Tibial artery (tissue), 4 donors: ENCODE measurements at regions of chr4 and their contacts with region 1.

Region 1: GRCh38 chr4:121943941-121944340 is 7.9 kb downstream of the TRPC3 start:
- DNase-seq: no peak
- H3K4me3 ChIP-seq: no peak overlapping the region
- H3K27ac ChIP-seq: no peak overlapping the region
- H3K4me1 ChIP-seq: no peaks in the 10 kb centered on the region
- H3K27me3 ChIP-seq: peaks cover 0 to 9% of the 10 kb centered on the region in 2 donors
- CTCF ChIP-seq: no peak

Region 2: GRCh38 chr4:121800961-121801714 is 142.8 kb before region 1 on chr4 and contains the start of gene EXOSC9:
- intact Hi-C with region 1: no loop called
- DNase-seq: peak; percentile 86 to 96
- H3K4me3 ChIP-seq: peak within 1 kb of the TSS; percentile 83 to 92
- H3K27ac ChIP-seq: peak within 1 kb of the TSS; percentile 81 to 85
- H3K4me1 ChIP-seq: peaks cover 0 to 16% (median 5%) of the 10 kb centered on the region in 4 donors
- H3K27me3 ChIP-seq: no peaks in the 10 kb centered on the region
- CTCF ChIP-seq: no peak

Region 3: DNA sequence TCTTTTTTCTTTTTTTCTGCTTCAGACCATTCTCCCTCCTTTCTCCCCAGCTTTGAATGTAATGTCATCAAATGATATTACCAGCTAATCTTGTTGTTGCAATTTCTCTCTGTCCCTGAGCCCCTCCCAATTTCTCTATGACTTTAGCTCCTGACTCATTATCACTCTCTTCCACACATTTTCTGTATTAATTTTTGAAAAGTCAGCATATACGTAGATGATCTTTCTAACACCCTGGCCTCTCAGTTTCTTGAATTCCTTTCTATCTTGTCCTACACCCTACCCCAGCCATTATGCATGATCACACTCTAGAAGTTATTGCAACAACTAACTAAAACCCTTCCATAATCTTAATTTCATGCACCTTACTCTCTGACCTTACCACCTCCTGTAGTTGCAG is 21.0 kb after region 1 on chr4:
- intact Hi-C with region 1: no loop called
- DNase-seq: no peak
- H3K4me3 ChIP-seq: no peak overlapping the region
- H3K27ac ChIP-seq: no peak overlapping the region
- H3K4me1 ChIP-seq: no peaks in the 10 kb centered on the region
- H3K27me3 ChIP-seq: peaks cover 0 to 6% of the 10 kb centered on the region in 2 donors
- CTCF ChIP-seq: no peak

Region 4: DNA sequence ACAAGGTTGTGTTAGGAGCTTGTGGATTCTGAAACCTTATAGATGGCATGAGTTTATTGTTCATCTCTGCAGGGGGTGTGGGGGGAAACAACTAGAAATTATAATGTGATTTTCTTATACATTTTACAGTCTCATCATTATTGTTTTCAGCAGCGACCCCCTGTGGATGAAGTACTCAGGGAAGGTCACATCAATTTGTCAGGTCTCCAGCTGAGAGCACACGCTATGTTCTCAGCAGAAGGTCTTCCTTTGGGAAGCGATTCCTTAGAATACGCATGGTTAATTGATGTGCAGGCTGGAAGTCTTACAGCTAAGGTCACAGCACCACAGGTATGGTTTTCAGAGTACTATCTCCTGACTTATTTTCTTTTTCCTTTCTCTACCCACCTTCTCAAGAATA is 280.4 kb after region 1 on chr4:
- intact Hi-C with region 1: loop called (anchors 10 kb)
- DNase-seq: no peak
- H3K4me3 ChIP-seq: no peak overlapping the region
- H3K27ac ChIP-seq: no peak overlapping the region
- H3K4me1 ChIP-seq: no peaks in the 10 kb centered on the region
- H3K27me3 ChIP-seq: no peaks in the 10 kb centered on the region
- CTCF ChIP-seq: no peak